ENCODE measurements at regions of chr9 and their contacts with region 1.

Region 1: GRCh38 chr9:85425153-85425611 is 316.6 kb downstream of the AGTPBP1 start:
- DNase-seq: peak; percentile 71
- ATAC-seq: no peak

Region 2: GRCh38 chr9:85377731-85378289 is 47.4 kb before region 1 on chr9:
- intact Hi-C with region 1: no loop called
- DNase-seq: no peak
- ATAC-seq: no peak

Region 3: DNA sequence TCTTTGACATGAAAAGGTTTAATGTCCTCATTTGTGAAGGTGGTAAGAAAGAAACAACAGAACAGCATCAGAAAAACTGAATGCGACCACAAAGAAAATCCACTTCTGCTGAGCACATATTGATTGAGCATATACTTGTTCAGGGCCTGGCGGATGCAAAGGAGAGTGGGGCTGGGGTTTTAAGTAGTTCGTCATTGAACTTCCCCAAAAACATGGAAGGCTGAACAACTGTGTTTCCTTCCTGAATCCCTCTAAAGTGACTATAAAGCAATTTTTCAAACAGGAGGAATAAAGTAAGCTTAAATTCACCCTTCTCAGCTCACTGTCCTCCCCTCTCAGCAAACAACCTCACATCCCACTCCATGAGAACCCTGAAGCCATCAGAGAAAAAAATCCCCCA is 53.7 kb after region 1 on chr9:
- intact Hi-C with region 1: loop called (anchors 10 kb)
- DNase-seq: no peak
- ATAC-seq: peak; percentile 65

Measured in Right ventricle myocardium inferior (tissue), 1 donor.